Naive thymus-derived CD4-positive, alpha-beta T cell (primary cell): ENCODE measurements at regions of chr16 and their contacts with region 1.

Region 1: GRCh38 chr16:68244903-68245853 is at the start of gene PLA2G15:
- DNase-seq: peak; percentile 89 to 96 (median 94)
- ATAC-seq: peak; percentile 99
- H3K4me3 ChIP-seq: peak within 1 kb of the TSS; percentile 99
- H3K4me3 Mint-ChIP-seq: peak within 1 kb of the TSS; percentile 91 to 100 (median 98)
- H3K27ac ChIP-seq: peak within 1 kb of the TSS; percentile 68
- H3K27ac Mint-ChIP-seq: peak within 1 kb of the TSS; percentile 61 to 94 (median 86)
- H3K4me1 ChIP-seq: peaks cover 13 to 14% of the 10 kb centered on the region in 2 donors
- H3K4me1 Mint-ChIP-seq: peaks cover 8 to 33% (median 28%) of the 10 kb centered on the region in 7 donors
- H3K27me3 ChIP-seq: no peaks in the 10 kb centered on the region
- H3K27me3 Mint-ChIP-seq: peaks cover 0 to 2% (median 0%) of the 10 kb centered on the region in 5 donors
- total RNA-seq, gene PLA2G15: 8.5 to 16.8 (median 9.9) TPM

Region 2: GRCh38 chr16:68257906-68258800 is 13.0 kb after region 1 on chr16:
- CTCF ChIA-PET with region 1: interaction called, 13 read pairs
- POLR2A ChIA-PET with region 1: interaction called, 3 read pairs
- intact Hi-C with region 1: loop called (anchors 1 kb)
- DNase-seq: no peak
- ATAC-seq: peak; percentile 52
- H3K4me3 ChIP-seq: no peak overlapping the region
- H3K4me3 Mint-ChIP-seq: no peak overlapping the region
- H3K27ac ChIP-seq: no peak overlapping the region
- H3K27ac Mint-ChIP-seq: peak overlapping the region in 7 of 9 donors; percentile 17 to 80 (median 30)
- H3K4me1 ChIP-seq: peaks cover 0 to 18% of the 10 kb centered on the region in 2 donors
- H3K4me1 Mint-ChIP-seq: peaks cover 7 to 33% (median 24%) of the 10 kb centered on the region in 7 donors
- H3K27me3 ChIP-seq: no peaks in the 10 kb centered on the region
- H3K27me3 Mint-ChIP-seq: no peaks in the 10 kb centered on the region

Region 3: GRCh38 chr16:68275611-68276191 is 30.5 kb after region 1 on chr16:
- CTCF ChIA-PET with region 1: no interaction called
- POLR2A ChIA-PET with region 1: interaction called, 6 read pairs
- intact Hi-C with region 1: loop called in 1 of 2 experiments (anchors 1 kb)
- DNase-seq: peak in 7 of 9 donors; percentile 68 to 84 (median 83)
- ATAC-seq: peak; percentile 86
- H3K4me3 ChIP-seq: peak overlapping the region; percentile 38
- H3K4me3 Mint-ChIP-seq: peak overlapping the region; percentile 71 to 100 (median 80)
- H3K27ac ChIP-seq: peak overlapping the region; percentile 83
- H3K27ac Mint-ChIP-seq: peak overlapping the region; percentile 89 to 98 (median 97)
- H3K4me1 ChIP-seq: peaks cover 58 to 83% of the 10 kb centered on the region in 2 donors
- H3K4me1 Mint-ChIP-seq: peaks cover 40 to 84% (median 74%) of the 10 kb centered on the region in 7 donors
- H3K27me3 ChIP-seq: no peaks in the 10 kb centered on the region
- H3K27me3 Mint-ChIP-seq: no peaks in the 10 kb centered on the region

Region 4: DNA sequence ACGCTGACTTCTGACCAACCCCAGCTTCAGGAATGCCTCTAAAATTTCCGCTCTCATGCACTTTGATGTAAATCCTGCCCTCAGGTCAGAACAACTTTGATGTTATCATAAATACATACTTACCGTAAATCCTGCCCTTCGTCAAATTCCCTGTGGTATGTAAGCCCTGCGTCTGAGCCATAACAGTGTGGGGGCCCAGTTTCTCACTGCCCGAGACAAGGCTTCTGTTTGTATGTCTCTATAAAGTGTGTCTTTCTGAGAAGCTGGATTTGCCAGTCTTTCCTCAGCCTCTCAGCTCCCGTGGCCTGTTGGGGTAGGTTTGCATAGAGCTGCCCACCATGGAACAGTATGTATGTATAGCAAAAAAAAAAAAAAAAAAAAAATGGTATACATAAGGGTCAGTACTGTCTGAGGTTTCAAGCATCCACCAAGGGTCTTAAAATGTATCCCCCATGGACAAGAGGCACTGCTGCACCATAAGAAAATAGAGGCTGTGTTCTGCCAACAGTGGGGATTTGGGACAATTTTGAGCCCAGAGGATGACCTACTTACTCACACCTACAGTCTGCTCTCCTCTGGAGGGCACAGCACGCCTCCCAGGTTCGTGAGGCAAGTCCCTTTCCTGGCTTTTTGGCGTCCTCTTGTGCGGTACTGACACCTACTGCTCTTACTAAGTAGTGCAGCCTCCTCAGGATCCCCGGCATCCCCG is 83.1 kb after region 1 on chr16:
- CTCF ChIA-PET with region 1: interaction called, 9 read pairs
- POLR2A ChIA-PET with region 1: no interaction called
- intact Hi-C with region 1: loop called (anchors 1 kb)
- DNase-seq: peak; percentile 52 to 81 (median 77)
- ATAC-seq: peak; percentile 99
- H3K4me3 ChIP-seq: no peak overlapping the region
- H3K4me3 Mint-ChIP-seq: no peak overlapping the region
- H3K27ac ChIP-seq: no peak overlapping the region
- H3K27ac Mint-ChIP-seq: peak overlapping the region in 4 of 9 donors; percentile 0 to 57 (median 9)
- H3K4me1 ChIP-seq: peaks cover 0 to 16% of the 10 kb centered on the region in 2 donors
- H3K4me1 Mint-ChIP-seq: peaks cover 16 to 28% (median 19%) of the 10 kb centered on the region in 7 donors
- H3K27me3 ChIP-seq: no peaks in the 10 kb centered on the region
- H3K27me3 Mint-ChIP-seq: no peaks in the 10 kb centered on the region

Region 5: DNA sequence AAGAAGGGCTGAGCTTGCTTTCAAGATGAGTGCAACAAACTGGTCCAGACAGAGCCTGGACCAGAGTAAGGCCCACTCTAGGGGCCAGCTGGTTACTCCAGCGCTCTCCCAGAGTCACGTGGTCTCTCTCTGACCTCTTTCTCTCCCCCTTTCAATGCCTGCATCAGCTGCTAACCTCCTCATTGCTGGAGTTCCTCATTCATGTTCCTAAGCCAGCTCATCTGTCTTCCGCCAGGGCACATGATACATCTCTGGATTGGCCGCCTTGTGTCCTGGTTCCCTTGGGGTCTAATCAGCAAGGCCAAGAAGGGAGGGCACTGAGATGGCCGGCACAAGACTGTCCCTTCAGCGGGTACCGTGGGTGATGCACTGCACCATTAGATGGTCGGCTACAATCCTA is 267.0 kb after region 1 on chr16:
- CTCF ChIA-PET with region 1: no interaction called
- POLR2A ChIA-PET with region 1: no interaction called
- intact Hi-C with region 1: loop called (anchors 5 kb)
- DNase-seq: peak in 1 of 9 donors; percentile 1
- ATAC-seq: no peak
- H3K4me3 ChIP-seq: no peak overlapping the region
- H3K4me3 Mint-ChIP-seq: peak overlapping the region in 1 of 10 donors; percentile 41
- H3K27ac ChIP-seq: no peak overlapping the region
- H3K27ac Mint-ChIP-seq: peak overlapping the region in 1 of 9 donors; percentile 10
- H3K4me1 ChIP-seq: peaks cover 0 to 3% of the 10 kb centered on the region in 2 donors
- H3K4me1 Mint-ChIP-seq: peaks cover 0 to 14% (median 3%) of the 10 kb centered on the region in 7 donors
- H3K27me3 ChIP-seq: no peaks in the 10 kb centered on the region
- H3K27me3 Mint-ChIP-seq: peaks cover 0 to 25% (median 0%) of the 10 kb centered on the region in 5 donors